ENCODE measurements at regions of chr15 and their contacts with region 1.

Region 1: GRCh38 chr15:39125904-39126303 is 455.0 kb upstream of the THBS1 start:
- DNase-seq: peak; percentile 75
- H3K4me3 ChIP-seq: no peak overlapping the region
- H3K27ac ChIP-seq: peak overlapping the region; percentile 90
- H3K4me1 ChIP-seq: peaks cover 63% of the 10 kb centered on the region
- H3K27me3 ChIP-seq: no peaks in the 10 kb centered on the region
- CTCF ChIP-seq: peak; percentile 68 to 74
- POLR2A ChIP-seq: no peak

Region 2: DNA sequence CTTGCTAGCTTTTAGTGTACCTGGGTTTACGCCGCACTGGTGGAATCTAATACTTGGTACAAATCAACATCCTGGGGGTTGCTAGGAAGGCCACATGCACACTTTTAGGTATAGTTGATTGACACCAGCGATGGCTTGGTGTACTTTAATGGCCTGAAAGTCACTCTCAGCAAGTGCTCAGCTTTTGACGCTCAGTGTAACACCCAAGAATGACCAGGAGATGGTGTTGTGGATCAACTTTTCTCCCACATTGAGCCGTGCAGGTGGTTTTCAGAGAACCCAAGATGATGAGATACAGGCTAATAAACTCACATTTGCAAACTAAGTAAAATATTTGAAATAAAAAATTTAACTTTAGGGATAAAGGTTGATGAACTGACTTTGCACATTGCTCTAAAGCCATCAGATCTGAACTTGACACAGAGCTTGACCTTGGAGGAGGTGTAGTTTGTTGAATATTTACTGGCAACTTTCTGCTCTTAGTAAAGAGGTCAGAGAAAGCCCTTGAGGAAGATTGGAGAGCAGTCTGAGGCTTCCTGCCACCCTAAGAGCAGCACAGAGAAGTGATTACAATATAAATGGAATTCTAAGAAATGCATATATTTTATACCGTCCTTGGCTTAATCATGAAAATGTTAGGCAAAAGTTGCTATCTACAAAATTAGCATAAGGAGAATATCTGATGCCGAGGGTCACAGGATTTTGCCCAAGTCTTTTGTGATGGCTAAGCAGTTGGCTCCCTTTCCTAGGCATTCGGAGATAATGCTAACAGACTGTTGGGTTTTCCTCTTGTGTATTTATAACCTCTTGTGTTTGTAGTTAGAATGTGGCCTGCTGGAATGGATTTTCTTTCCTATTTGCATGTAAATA is 417.9 kb before region 1 on chr15:
- CTCF ChIA-PET with region 1: interaction called, 5 read pairs
- POLR2A ChIA-PET with region 1: no interaction called
- dilution Hi-C with region 1: no loop called
- intact Hi-C with region 1: loop called (anchors 2 kb)
- DNase-seq: peak; percentile 87
- H3K4me3 ChIP-seq: no peak overlapping the region
- H3K27ac ChIP-seq: no peak overlapping the region
- H3K4me1 ChIP-seq: peaks cover 10% of the 10 kb centered on the region
- H3K27me3 ChIP-seq: no peaks in the 10 kb centered on the region
- CTCF ChIP-seq: peak; percentile 71 to 78
- POLR2A ChIP-seq: no peak

Region 3: GRCh38 chr15:38843736-38844590 is 281.9 kb before region 1 on chr15:
- CTCF ChIA-PET with region 1: no interaction called
- POLR2A ChIA-PET with region 1: no interaction called
- dilution Hi-C with region 1: loop called (anchors 25 kb)
- intact Hi-C with region 1: loop called (anchors 1 kb)
- DNase-seq: peak; percentile 95
- H3K4me3 ChIP-seq: peak overlapping the region in 1 of 3 experiments; percentile 15
- H3K27ac ChIP-seq: peak overlapping the region; percentile 98
- H3K4me1 ChIP-seq: peaks cover 41% of the 10 kb centered on the region
- H3K27me3 ChIP-seq: no peaks in the 10 kb centered on the region
- CTCF ChIP-seq: no peak
- POLR2A ChIP-seq: peak; percentile 61

Region 4: DNA sequence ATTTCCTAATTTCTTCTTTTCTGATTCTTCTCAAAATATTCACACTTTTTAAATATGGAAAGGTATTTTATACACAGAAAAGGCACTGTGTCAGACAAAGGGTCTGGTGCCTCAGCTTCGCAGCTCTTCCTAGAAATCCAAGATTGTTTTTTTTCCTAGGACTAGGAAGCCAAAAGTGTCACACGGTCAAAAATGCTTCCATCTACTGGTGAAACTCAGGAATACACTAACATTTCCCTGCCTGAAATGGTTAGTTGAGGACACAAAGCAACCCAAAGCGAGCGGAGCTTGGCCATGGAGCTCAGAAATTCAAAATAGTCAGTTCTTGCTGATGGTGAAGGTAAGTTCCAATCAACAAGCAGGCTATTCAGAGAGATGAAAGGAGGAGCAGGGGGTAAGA is 134.8 kb before region 1 on chr15:
- CTCF ChIA-PET with region 1: interaction called, 18 read pairs
- POLR2A ChIA-PET with region 1: interaction called, 12 read pairs
- dilution Hi-C with region 1: no loop called
- intact Hi-C with region 1: loop called (anchors 1 kb)
- DNase-seq: peak; percentile 83
- H3K4me3 ChIP-seq: no peak overlapping the region
- H3K27ac ChIP-seq: peak overlapping the region; percentile 2
- H3K4me1 ChIP-seq: peaks cover 34% of the 10 kb centered on the region
- H3K27me3 ChIP-seq: no peaks in the 10 kb centered on the region
- CTCF ChIP-seq: peak; percentile 50 to 51
- POLR2A ChIP-seq: no peak

Region 5: GRCh38 chr15:39102431-39102830 is 23.5 kb before region 1 on chr15:
- CTCF ChIA-PET with region 1: interaction called, 4 read pairs
- POLR2A ChIA-PET with region 1: no interaction called
- dilution Hi-C with region 1: no loop called
- intact Hi-C with region 1: loop called (anchors 2 kb)
- DNase-seq: peak; percentile 55
- H3K4me3 ChIP-seq: no peak overlapping the region
- H3K27ac ChIP-seq: peak overlapping the region; percentile 58
- H3K4me1 ChIP-seq: peaks cover 28% of the 10 kb centered on the region
- H3K27me3 ChIP-seq: no peaks in the 10 kb centered on the region
- CTCF ChIP-seq: no peak
- POLR2A ChIP-seq: no peak

Region 6: GRCh38 chr15:39171944-39172368 is 46.1 kb after region 1 on chr15:
- CTCF ChIA-PET with region 1: interaction called, 9 read pairs
- POLR2A ChIA-PET with region 1: interaction called, 5 read pairs
- dilution Hi-C with region 1: no loop called
- intact Hi-C with region 1: loop called (anchors 1 kb)
- DNase-seq: peak; percentile 99
- H3K4me3 ChIP-seq: no peak overlapping the region
- H3K27ac ChIP-seq: peak overlapping the region; percentile 87
- H3K4me1 ChIP-seq: peaks cover 17% of the 10 kb centered on the region
- H3K27me3 ChIP-seq: no peaks in the 10 kb centered on the region
- CTCF ChIP-seq: peak; percentile 41 to 62
- POLR2A ChIP-seq: peak; percentile 30

Region 7: DNA sequence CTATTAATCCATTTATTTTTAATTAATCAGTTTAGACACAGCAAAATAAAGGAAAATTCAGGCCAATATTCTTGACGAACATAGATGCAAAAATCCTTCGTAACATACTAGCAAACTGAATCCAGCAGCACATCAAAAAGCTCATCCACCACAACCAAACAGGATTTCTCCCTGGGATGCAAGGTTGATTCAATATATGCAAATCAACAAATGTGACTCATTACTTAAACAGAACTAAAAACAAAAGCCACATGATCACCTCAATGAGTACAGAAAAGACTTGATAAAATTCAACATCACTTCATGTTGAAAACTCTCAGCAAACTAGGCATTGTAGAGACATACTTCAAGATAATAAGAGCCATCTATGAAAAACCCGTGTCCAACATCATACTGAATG is 90.9 kb after region 1 on chr15:
- CTCF ChIA-PET with region 1: no interaction called
- POLR2A ChIA-PET with region 1: no interaction called
- dilution Hi-C with region 1: no loop called
- intact Hi-C with region 1: no loop called
- DNase-seq: no peak
- H3K4me3 ChIP-seq: no peak overlapping the region
- H3K27ac ChIP-seq: no peak overlapping the region
- H3K4me1 ChIP-seq: no peaks in the 10 kb centered on the region
- H3K27me3 ChIP-seq: no peaks in the 10 kb centered on the region
- CTCF ChIP-seq: no peak
- POLR2A ChIP-seq: no peak

Region 8: DNA sequence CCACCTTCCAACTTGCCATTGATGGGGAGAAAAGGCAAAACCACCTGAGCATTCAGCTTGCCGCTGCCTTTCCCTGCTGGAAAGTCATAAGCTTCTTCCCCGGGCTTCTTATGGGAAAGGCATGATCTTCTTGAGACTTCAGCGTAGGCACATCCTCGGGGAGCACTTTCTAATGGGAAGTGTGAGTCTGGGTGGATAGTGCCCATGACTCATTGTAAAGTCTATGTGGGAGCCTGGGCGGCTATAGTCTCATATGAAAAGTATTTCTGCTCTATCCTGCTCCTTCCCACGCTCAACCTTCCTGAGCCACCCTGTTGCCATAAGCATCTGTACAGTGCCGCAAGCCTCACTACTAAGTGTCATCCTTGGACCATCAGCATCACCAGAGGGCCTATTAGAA is 145.0 kb after region 1 on chr15:
- CTCF ChIA-PET with region 1: no interaction called
- POLR2A ChIA-PET with region 1: no interaction called
- dilution Hi-C with region 1: no loop called
- intact Hi-C with region 1: loop called (anchors 5 kb)
- DNase-seq: peak; percentile 90
- H3K4me3 ChIP-seq: no peak overlapping the region
- H3K27ac ChIP-seq: peak overlapping the region; percentile 89
- H3K4me1 ChIP-seq: peaks cover 53% of the 10 kb centered on the region
- H3K27me3 ChIP-seq: no peaks in the 10 kb centered on the region
- CTCF ChIP-seq: no peak
- POLR2A ChIP-seq: no peak